GM10248 (cell line): ENCODE measurements at regions of chr19 and their contacts with region 1.

Region 1: DNA sequence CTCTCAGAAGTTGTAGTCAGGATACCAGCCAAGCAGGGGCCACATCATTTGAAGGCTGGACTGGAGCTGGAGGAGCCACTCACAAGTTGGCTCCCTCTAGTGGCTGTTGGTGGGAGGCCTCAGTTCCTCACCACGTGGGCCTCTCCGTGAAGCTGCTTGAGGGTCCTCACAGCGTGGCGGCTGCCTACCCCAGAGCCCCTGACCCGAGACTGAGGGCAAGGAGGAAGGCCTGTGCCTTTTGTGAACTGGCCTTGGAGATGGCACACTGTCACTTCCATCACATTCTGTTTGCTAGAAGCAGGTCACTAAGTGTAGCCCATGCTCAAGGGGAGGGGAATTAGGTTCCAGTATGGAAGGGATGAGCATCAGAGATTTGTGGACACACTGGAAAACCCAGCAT is 14.6 kb downstream of the GNA11 start:
- DNase-seq: peak; percentile 77
- CTCF ChIP-seq: peak; percentile 87

Region 2: DNA sequence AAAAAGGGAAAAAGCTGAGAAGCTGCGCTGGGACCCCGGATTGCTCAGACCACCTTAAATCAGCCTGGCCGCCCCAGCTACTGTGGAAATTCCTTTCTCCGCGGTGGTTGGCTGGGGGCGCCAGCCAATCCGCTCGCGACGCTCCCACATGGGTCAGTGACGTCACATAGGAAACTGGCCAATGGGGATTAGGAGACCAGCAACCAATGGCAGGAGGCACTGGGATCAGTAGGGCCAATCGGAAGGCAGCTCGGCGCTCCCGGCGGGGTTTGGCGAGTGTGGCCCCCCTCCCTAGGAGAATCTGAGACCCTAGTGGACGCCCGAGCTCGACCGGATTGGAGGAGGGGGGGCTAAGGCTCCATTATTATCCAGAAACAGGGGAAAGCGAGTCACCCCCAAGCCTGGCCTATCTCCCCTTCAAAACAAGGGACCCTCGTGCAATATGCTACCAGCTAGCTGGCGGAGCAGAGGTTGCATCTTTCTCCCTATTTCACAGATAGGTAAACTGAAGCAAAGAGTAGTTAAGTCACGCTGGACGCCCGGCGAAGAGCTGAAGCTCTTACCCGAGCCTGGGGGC is 73.1 kb before region 1 on chr19:
- CTCF ChIA-PET with region 1: interaction called, 19 read pairs
- POLR2A ChIA-PET with region 1: no interaction called
- DNase-seq: peak; percentile 100
- CTCF ChIP-seq: no peak

Region 3: DNA sequence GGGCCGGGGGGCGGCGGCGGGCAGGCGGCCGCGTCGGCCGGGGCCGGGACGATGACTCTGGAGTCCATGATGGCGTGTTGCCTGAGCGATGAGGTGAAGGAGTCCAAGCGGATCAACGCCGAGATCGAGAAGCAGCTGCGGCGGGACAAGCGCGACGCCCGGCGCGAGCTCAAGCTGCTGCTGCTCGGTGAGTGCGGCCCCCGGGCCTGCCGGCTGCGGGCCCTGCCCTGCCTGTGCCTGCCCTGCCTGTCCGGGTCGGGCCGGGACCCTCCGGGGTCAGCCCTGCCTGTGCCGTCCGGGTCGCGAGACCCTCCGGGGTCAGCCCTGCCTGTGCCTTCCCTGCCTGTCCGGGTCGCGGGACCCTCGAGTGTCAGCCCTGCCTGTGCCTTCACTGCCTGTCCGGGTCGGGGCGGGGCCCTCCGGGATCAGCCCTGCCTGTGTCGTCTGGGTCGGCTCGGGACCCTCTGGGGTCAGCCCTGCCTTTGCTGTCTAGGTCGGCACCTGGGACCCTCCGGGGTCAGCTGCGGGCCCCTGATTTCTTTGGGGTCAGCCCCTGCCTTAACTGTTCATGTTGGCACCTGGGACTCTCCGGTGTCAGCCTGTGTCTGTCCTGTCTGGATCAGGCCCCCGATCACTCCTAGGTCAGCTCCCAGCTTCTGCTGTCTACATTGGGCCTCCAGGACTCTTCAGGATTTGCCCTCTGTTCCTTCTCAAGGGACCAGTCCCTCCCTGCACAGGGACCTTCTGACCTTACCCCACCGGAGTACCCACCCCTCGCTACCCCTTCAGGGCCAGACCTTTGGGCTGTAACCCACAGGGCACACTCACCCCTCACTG is 14.0 kb before region 1 on chr19:
- CTCF ChIA-PET with region 1: interaction called, 20 read pairs
- POLR2A ChIA-PET with region 1: no interaction called
- DNase-seq: no peak
- CTCF ChIP-seq: no peak

Region 4: DNA sequence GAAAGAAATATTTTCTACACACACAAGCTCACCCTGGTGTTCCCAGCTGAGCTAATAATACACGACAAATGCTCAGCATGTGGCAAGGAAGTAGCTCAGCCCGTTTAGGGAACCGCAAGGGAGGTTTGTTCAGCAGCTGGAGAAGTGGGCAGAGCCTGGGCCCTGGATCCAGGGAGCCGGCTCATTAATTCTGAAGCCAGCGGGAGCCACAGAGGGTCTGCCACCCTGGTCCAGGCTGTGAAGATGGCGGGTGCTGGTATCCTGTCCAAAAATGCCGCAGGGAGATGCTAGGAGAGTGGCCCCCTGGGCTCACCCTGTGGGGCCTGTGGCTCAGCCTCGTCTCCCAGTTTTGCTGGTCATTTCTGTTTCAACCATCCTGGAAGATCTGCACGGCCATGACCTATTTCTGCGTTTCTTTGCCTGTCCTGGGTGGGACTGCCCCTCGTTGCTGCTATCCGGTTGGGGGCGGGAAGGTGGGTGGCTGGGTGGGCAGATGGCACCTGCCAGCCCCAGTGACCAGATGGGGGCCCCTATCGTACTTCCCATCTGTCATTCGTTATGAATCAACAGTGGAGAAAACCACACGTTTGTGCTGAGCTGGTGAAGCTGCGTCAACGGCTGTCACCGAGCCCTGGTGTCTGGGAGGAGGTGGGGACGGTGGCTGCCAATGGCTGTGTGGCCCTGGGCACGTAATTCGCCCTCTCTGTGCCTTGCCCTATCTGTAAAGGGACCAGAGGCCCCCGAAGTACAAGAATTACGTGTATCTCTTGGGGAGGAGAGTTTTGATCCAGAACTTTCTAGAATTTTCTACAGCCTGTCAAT is 24.4 kb after region 1 on chr19:
- CTCF ChIA-PET with region 1: interaction called, 78 read pairs
- POLR2A ChIA-PET with region 1: no interaction called
- DNase-seq: peak; percentile 81
- CTCF ChIP-seq: no peak

Region 5: GRCh38 chr19:3210347-3211017 is 101.7 kb after region 1 on chr19:
- CTCF ChIA-PET with region 1: no interaction called
- POLR2A ChIA-PET with region 1: no interaction called
- DNase-seq: peak; percentile 86
- CTCF ChIP-seq: peak; percentile 83

Region 6: DNA sequence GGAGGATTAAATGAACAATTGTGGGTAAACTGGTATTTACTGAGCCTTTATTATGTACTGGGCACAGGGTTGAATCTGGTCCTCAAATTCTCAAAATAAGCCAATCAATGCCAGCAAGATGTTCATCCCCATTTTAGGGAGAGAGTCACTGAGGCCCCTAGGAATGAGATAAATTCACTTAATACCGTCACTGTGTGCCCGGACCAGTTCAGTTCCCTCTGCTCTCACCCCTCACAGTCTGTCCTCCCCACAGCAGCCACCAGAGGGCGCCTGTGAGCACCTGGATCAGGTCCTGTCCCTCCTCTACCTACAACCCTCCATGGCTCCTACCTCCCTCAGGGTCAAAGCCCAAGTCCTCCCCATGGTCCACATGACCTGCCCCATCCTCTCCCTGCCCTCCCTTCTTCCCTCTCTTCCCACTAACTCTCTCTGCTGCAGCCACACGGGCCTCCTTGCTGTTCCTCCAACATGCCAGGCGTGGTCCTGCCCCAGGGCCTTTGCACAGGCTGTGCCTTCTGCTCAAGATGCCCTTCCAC is 215.6 kb after region 1 on chr19:
- CTCF ChIA-PET with region 1: no interaction called
- POLR2A ChIA-PET with region 1: no interaction called
- DNase-seq: peak; percentile 73
- CTCF ChIP-seq: peak; percentile 65